ENCODE measurements at regions of chr17 and their contacts with region 1.

Region 1: GRCh38 chr17:51764387-51764972 is 394.0 kb downstream of the CA10 start:
- DNase-seq: peak; percentile 78
- H3K4me3 Mint-ChIP-seq: no peak overlapping the region
- H3K27ac Mint-ChIP-seq: no peak overlapping the region
- H3K4me1 Mint-ChIP-seq: peaks cover 7% of the 10 kb centered on the region
- H3K27me3 Mint-ChIP-seq: peaks cover 85% of the 10 kb centered on the region
- CTCF ChIP-seq: peak; percentile 97

Region 2: GRCh38 chr17:51371732-51372151 is 392.7 kb before region 1 on chr17:
- CTCF ChIA-PET with region 1: interaction called, 4 read pairs
- intact Hi-C with region 1: loop called (anchors 10 kb)
- DNase-seq: peak; percentile 70
- H3K4me3 Mint-ChIP-seq: peak overlapping the region; percentile 34
- H3K27ac Mint-ChIP-seq: peak overlapping the region; percentile 69
- H3K4me1 Mint-ChIP-seq: peaks cover 9% of the 10 kb centered on the region
- H3K27me3 Mint-ChIP-seq: peaks cover 76% of the 10 kb centered on the region
- CTCF ChIP-seq: peak; percentile 82

Region 3: DNA sequence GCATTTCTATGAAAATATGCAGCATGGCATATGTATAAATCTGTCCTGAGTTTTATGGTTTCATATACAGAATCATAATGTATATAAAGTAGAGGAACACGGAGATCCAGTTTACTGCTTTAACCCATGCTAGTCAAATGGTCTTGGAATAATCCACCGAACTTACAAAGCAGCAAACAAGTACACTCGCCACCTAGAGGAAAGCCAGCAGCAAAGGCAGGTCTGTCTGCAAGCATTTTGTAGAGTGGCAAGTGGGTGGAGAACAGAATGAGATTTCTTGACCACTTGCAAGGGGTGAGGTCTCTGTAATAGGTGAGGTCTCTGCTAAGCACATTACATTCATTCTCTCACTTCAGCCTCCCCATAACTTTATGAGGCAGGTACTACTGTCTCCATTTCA is 85.7 kb after region 1 on chr17:
- CTCF ChIA-PET with region 1: interaction called, 3 read pairs
- intact Hi-C with region 1: loop called (anchors 1 kb)
- DNase-seq: no peak
- H3K4me3 Mint-ChIP-seq: no peak overlapping the region
- H3K27ac Mint-ChIP-seq: no peak overlapping the region
- H3K4me1 Mint-ChIP-seq: peaks cover 6% of the 10 kb centered on the region
- H3K27me3 Mint-ChIP-seq: peaks cover 92% of the 10 kb centered on the region
- CTCF ChIP-seq: no peak

Region 4: DNA sequence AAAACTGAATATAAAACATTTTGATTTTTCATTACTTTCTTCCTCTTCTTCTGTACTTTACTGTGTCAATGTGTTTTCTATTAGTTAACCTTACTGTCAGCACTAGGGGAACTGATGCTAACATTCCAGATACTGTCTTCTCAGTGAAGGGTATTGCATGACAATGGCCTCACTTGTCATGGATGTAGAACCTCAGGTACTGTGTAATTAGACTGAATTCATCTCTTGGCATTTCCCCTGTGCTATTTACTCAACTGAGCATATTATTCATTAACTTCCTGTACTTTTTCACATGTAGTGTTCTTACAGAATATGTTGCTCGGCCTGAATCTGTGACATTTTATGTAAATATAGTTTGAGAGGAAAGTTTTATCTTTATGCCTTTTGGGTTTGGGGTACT is 157.0 kb after region 1 on chr17:
- CTCF ChIA-PET with region 1: no interaction called
- intact Hi-C with region 1: loop called (anchors 10 kb)
- DNase-seq: no peak
- H3K4me3 Mint-ChIP-seq: no peak overlapping the region
- H3K27ac Mint-ChIP-seq: no peak overlapping the region
- H3K4me1 Mint-ChIP-seq: peaks cover 19% of the 10 kb centered on the region
- H3K27me3 Mint-ChIP-seq: peaks cover 71% of the 10 kb centered on the region
- CTCF ChIP-seq: no peak

Region 5: DNA sequence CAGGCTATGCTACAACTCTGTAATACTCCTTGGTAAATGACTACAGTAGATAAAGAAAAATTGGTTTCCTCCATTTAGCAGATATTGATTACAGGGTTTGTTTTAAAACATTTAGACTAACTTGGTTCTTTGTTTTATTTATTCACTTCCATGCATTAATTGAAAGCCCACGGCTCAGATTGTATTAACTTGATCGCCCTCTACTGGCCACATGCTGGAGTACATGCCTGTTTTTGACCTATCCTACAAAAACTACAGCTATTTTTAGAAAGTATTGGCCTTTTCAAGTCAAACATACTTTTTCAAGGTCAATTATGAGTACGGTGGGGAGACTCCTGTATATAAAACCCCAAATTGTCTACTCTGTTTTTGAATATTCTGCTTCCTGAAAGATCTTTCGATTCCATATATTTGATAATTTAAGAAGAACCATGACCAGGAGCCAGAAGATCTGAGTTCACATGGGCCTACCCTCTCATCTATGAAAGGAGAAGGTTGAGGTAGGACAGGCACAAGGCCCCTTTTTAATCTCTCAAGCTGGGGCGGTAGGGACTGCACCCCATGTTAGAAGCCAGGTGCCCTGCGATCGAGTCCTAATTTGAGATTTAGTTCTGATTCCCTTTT is 342.3 kb after region 1 on chr17:
- CTCF ChIA-PET with region 1: interaction called, 37 read pairs
- intact Hi-C with region 1: loop called (anchors 1 kb)
- DNase-seq: peak; percentile 71
- H3K4me3 Mint-ChIP-seq: no peak overlapping the region
- H3K27ac Mint-ChIP-seq: no peak overlapping the region
- H3K4me1 Mint-ChIP-seq: no peaks in the 10 kb centered on the region
- H3K27me3 Mint-ChIP-seq: no peaks in the 10 kb centered on the region
- CTCF ChIP-seq: peak; percentile 95

Region 6: DNA sequence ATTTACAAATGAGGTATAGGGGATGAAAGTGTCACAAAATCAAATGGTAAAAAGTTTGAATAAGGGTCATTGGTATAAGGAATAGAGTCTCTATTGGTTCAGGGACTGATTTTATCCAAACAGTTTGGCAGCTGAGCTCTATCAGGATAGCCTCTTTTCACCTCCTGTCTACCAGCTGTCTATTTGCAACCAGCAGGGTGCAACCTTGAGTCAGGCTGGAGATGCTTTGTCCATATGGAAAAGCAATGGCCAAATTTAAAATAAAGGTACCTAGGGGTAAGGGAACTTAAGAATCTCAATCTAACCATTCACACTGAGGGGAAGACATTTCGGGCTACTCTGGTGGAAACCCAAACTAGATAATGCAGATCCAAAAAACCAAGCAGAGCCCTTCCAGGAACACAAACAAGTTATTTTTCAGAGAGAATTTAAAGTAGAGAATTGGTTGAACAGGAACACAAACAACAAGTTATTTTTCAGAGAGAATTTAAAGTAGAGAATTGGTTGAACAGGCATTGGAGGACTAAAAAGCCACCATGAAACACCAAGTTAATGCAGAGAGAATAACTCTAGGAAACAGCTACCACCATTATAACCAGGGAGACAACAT is 406.6 kb after region 1 on chr17:
- CTCF ChIA-PET with region 1: interaction called, 26 read pairs
- intact Hi-C with region 1: loop called (anchors 5 kb)
- DNase-seq: peak; percentile 79
- H3K4me3 Mint-ChIP-seq: no peak overlapping the region
- H3K27ac Mint-ChIP-seq: peak overlapping the region; percentile 17
- H3K4me1 Mint-ChIP-seq: peaks cover 10% of the 10 kb centered on the region
- H3K27me3 Mint-ChIP-seq: no peaks in the 10 kb centered on the region
- CTCF ChIP-seq: peak; percentile 81

Region 7: DNA sequence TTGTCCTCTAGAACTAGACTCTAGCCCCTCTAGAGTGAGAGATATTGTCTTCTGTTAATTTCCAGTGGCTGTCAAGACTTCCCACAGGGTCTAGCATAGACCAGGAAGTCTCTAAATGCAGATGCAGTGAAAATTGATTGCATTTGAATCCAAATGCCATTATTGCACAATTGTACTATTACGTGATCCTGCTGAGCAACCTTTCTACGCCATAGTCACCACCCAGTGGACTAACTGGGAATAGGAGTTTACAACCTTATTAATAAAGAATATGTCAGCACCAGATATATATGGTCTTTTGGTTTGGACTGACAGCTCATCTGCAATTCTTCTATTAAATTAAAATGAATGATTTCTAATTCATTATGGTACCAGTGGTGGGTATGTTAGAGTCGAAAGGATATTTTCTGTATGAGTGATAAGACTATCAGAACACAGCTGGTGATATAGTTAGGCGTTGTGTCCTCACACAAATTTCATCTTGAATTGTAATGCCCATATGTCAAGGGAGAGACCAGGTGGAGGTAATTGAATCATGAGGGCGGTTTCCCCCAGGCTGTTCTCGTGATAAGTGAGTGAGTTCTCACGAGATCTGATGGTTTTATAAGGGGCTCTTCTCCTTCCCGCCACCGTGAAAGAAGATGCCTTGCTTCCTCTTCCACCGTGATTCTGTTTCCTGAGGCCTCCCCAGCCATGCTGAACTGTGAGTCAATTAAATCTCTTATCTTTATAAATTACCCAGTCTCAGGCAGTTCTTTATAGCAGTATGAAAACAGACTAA is 532.9 kb after region 1 on chr17:
- CTCF ChIA-PET with region 1: interaction called, 3 read pairs
- intact Hi-C with region 1: loop called (anchors 5 kb)
- DNase-seq: peak; percentile 57
- H3K4me3 Mint-ChIP-seq: no peak overlapping the region
- H3K27ac Mint-ChIP-seq: no peak overlapping the region
- H3K4me1 Mint-ChIP-seq: peaks cover 24% of the 10 kb centered on the region
- H3K27me3 Mint-ChIP-seq: no peaks in the 10 kb centered on the region
- CTCF ChIP-seq: peak; percentile 61